B cell (primary cell): ENCODE measurements at regions of chr2 and their contacts with region 1.

Region 1: GRCh38 chr2:98444436-98445176 is at the start of gene INPP4A:
- DNase-seq: peak; percentile 89
- ATAC-seq: peak; percentile 95
- H3K4me3 ChIP-seq: peak within 1 kb of the TSS; percentile 42 to 89 (median 71)
- H3K4me3 Mint-ChIP-seq: peak within 1 kb of the TSS; percentile 95
- H3K27ac ChIP-seq: peak within 1 kb of the TSS in 1 of 2 donors; percentile 50
- H3K27ac Mint-ChIP-seq: peak within 1 kb of the TSS; percentile 81
- H3K4me1 ChIP-seq: peaks cover 13 to 16% of the 10 kb centered on the region in 2 donors
- H3K4me1 Mint-ChIP-seq: peaks cover 19% of the 10 kb centered on the region
- H3K27me3 ChIP-seq: no peaks in the 10 kb centered on the region
- H3K27me3 Mint-ChIP-seq: no peaks in the 10 kb centered on the region
- CTCF ChIP-seq: peak; percentile 13
- total RNA-seq, gene INPP4A: 22.5 and 29.9 TPM in 2 replicates

Region 2: GRCh38 chr2:98455494-98455976 is 10.9 kb after region 1 on chr2:
- CTCF ChIA-PET with region 1: interaction called, 5 read pairs
- POLR2A ChIA-PET with region 1: interaction called, 4 read pairs
- intact Hi-C with region 1: loop called (anchors 1 kb)
- DNase-seq: peak; percentile 80
- ATAC-seq: peak; percentile 85
- H3K4me3 ChIP-seq: peak overlapping the region in 3 of 5 experiments; percentile 10 to 44 (median 15)
- H3K4me3 Mint-ChIP-seq: peak overlapping the region; percentile 74
- H3K27ac ChIP-seq: peak overlapping the region; percentile 11 to 51
- H3K27ac Mint-ChIP-seq: peak overlapping the region; percentile 83
- H3K4me1 ChIP-seq: peaks cover 49 to 67% of the 10 kb centered on the region in 2 donors
- H3K4me1 Mint-ChIP-seq: peaks cover 59% of the 10 kb centered on the region
- H3K27me3 ChIP-seq: peaks cover 0 to 3% (median 0%) of the 10 kb centered on the region in 4 experiments
- H3K27me3 Mint-ChIP-seq: no peaks in the 10 kb centered on the region
- CTCF ChIP-seq: no peak

Region 3: GRCh38 chr2:98465456-98466226 is 21.0 kb after region 1 on chr2:
- CTCF ChIA-PET with region 1: no interaction called
- POLR2A ChIA-PET with region 1: no interaction called
- intact Hi-C with region 1: loop called (anchors 2 kb)
- DNase-seq: peak; percentile 40
- ATAC-seq: no peak
- H3K4me3 ChIP-seq: peak overlapping the region in 1 of 5 experiments; percentile 12
- H3K4me3 Mint-ChIP-seq: peak overlapping the region; percentile 64
- H3K27ac ChIP-seq: peak overlapping the region; percentile 31 to 58
- H3K27ac Mint-ChIP-seq: peak overlapping the region; percentile 82
- H3K4me1 ChIP-seq: peaks cover 56 to 68% of the 10 kb centered on the region in 2 donors
- H3K4me1 Mint-ChIP-seq: peaks cover 63% of the 10 kb centered on the region
- H3K27me3 ChIP-seq: no peaks in the 10 kb centered on the region
- H3K27me3 Mint-ChIP-seq: no peaks in the 10 kb centered on the region
- CTCF ChIP-seq: no peak

Region 4: GRCh38 chr2:98487806-98488651 is 43.4 kb after region 1 on chr2:
- CTCF ChIA-PET with region 1: no interaction called
- POLR2A ChIA-PET with region 1: no interaction called
- intact Hi-C with region 1: loop called (anchors 5 kb)
- DNase-seq: peak; percentile 59
- ATAC-seq: peak; percentile 86
- H3K4me3 ChIP-seq: no peak overlapping the region
- H3K4me3 Mint-ChIP-seq: no peak overlapping the region
- H3K27ac ChIP-seq: no peak overlapping the region
- H3K27ac Mint-ChIP-seq: no peak overlapping the region
- H3K4me1 ChIP-seq: peaks cover 2 to 21% of the 10 kb centered on the region in 2 donors
- H3K4me1 Mint-ChIP-seq: peaks cover 40% of the 10 kb centered on the region
- H3K27me3 ChIP-seq: no peaks in the 10 kb centered on the region
- H3K27me3 Mint-ChIP-seq: no peaks in the 10 kb centered on the region
- CTCF ChIP-seq: peak; percentile 78

Region 5: DNA sequence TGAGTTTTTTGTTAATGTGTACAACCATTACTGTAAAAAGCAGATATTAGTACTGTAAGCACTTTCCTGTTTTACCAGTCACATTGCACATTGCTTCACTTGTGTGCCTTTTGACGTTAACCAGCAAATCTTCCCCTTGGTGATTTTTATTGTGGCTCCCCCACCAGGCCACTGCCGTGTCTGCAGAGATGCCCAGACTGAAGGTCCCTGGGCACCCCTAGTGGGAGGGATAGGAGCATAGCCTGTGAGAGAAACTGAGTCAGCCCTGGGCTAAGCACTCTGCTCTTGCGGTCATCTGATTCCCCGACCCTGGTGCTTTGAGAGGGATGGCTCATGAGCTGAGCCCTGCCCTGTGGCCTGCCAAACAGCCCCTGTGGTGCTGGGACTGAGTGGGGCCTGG is 73.5 kb after region 1 on chr2:
- CTCF ChIA-PET with region 1: no interaction called
- POLR2A ChIA-PET with region 1: no interaction called
- intact Hi-C with region 1: loop called (anchors 1 kb)
- DNase-seq: peak; percentile 46
- ATAC-seq: no peak
- H3K4me3 ChIP-seq: no peak overlapping the region
- H3K4me3 Mint-ChIP-seq: no peak overlapping the region
- H3K27ac ChIP-seq: no peak overlapping the region
- H3K27ac Mint-ChIP-seq: no peak overlapping the region
- H3K4me1 ChIP-seq: no peaks in the 10 kb centered on the region
- H3K4me1 Mint-ChIP-seq: no peaks in the 10 kb centered on the region
- H3K27me3 ChIP-seq: no peaks in the 10 kb centered on the region
- H3K27me3 Mint-ChIP-seq: no peaks in the 10 kb centered on the region
- CTCF ChIP-seq: peak; percentile 42

Region 6: DNA sequence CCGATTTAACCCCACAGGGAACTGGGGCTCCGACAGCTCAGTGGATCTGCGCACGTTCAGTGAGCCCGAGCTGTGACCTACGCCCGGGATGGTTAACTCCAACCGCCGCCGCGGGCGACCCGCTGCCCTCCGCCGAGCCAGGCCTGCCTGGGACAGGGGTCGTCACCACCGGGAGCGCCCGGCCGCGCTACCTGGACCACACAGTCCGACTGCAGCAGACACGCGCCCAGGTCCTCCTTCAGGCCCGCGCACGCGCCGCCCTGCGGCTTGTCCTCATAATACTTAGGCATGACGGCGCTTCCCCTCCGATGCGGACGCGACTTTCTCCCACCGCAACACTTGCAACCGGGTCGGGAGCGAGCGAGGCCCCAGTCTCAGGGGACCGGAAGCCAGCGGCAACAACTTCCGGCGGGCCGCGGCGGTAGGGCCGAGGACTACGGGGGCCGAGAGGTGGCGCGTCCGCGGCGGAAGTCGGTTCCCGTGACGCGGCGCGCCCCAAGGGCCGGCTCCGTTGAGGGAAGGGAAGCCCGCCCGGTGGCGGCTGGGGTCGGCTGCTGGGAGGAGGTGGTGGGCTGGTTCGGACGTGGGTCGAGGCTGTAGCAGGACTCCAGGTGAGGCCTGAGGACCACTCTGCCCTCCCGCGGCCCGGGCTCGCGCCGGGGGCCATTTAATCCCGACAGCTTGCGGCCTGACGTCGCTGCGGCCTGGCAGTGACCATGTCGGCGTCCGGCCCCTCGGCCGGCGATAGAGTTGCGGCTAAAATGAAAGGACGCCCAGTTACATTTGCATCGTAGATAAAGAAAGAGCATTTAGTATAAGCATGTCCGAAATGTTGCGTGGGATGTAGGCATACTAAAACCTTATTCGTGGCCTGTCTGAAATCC is 163.8 kb after region 1 on chr2 and contains the starts of genes COA5 and UNC50:
- CTCF ChIA-PET with region 1: no interaction called
- POLR2A ChIA-PET with region 1: no interaction called
- intact Hi-C with region 1: loop called (anchors 10 kb)
- DNase-seq: peak; percentile 94
- ATAC-seq: peak; percentile 92
- H3K4me3 ChIP-seq: peak within 1 kb of the TSS; percentile 88 to 99 (median 97)
- H3K4me3 Mint-ChIP-seq: peak within 1 kb of the TSS; percentile 93
- H3K27ac ChIP-seq: peak within 1 kb of the TSS; percentile 86 to 97
- H3K27ac Mint-ChIP-seq: peak within 1 kb of the TSS; percentile 94
- H3K4me1 ChIP-seq: peaks cover 33 to 35% of the 10 kb centered on the region in 2 donors
- H3K4me1 Mint-ChIP-seq: peaks cover 67% of the 10 kb centered on the region
- H3K27me3 ChIP-seq: no peaks in the 10 kb centered on the region
- H3K27me3 Mint-ChIP-seq: no peaks in the 10 kb centered on the region
- CTCF ChIP-seq: no peak
- total RNA-seq, gene COA5: 46.9 and 48.9 TPM in 2 replicates
- total RNA-seq, gene UNC50: 38.8 and 45.5 TPM in 2 replicates

Region 7: GRCh38 chr2:98664327-98664726 is 219.7 kb after region 1 on chr2:
- CTCF ChIA-PET with region 1: no interaction called
- POLR2A ChIA-PET with region 1: no interaction called
- intact Hi-C with region 1: no loop called
- DNase-seq: no peak
- ATAC-seq: no peak
- H3K4me3 ChIP-seq: no peak overlapping the region
- H3K4me3 Mint-ChIP-seq: no peak overlapping the region
- H3K27ac ChIP-seq: no peak overlapping the region
- H3K27ac Mint-ChIP-seq: no peak overlapping the region
- H3K4me1 ChIP-seq: no peaks in the 10 kb centered on the region
- H3K4me1 Mint-ChIP-seq: peaks cover 18% of the 10 kb centered on the region
- H3K27me3 ChIP-seq: no peaks in the 10 kb centered on the region
- H3K27me3 Mint-ChIP-seq: no peaks in the 10 kb centered on the region
- CTCF ChIP-seq: no peak